PC-9 (cell line): ENCODE measurements at regions of chr13 and their contacts with region 1.

Region 1: DNA sequence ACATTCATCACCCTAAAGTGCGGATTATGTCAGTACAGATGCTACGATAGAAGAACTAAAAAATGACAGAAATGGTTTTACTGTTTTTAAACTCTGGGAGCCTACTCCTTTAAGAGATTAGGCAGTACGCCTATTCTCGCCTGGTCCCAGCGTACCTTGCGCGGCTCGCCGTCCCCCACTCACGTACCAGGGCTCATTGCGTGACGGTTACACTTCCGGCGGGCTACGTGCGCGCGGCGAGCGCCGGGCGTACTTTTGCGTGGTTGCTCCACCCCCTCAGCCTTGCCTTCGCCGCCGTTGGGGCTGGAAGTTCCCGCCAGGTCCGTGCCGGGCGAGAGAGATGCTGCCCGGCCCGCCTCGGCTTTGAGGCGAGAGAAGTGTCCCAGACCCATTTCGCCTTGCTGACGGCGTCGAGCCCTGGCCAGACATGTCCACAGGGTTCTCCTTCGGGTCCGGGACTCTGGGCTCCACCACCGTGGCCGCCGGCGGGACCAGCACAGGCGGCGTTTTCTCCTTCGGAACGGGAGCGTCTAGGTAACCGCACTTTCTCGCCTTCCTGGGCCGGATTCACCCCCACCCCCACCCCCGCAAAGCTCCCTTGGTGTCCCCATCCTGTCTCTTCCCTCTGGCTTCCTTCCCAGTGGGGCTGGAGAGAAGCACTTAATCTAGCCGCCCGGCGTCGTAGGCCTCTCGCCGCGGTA is at the start of gene NUP58:
- DNase-seq: peak; percentile 79 to 85
- H3K4me3 ChIP-seq: peak within 1 kb of the TSS; percentile 64
- H3K27ac ChIP-seq: peak within 1 kb of the TSS; percentile 65
- H3K4me1 ChIP-seq: peaks cover 41% of the 10 kb centered on the region
- H3K27me3 ChIP-seq: 0 out of 2 replicates have a peak, but pooled peaks cover 7% of the 10 kb centered on the region
- CTCF ChIP-seq: no peak
- total RNA-seq, gene NUP58: 50.6 and 55.1 TPM in 2 replicates

Region 2: DNA sequence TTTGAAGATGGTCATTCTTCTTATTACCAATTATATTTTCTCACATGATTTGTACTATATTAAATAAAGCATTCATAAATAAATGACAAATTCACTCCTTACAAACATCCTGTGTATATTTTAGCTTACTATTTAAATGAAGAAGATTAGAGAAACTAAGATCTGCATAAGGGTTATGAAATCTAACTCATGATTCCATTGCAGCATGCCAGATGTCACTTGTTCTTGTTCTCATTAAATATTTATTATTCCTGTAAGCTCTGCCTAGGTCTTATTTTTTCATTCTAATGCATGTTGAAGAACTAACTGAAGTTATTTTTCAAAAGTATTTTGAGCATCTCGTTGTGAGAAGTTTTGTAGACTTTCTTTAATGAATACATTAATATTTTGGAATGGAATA is 18.3 kb after region 1 on chr13:
- CTCF ChIA-PET with region 1: interaction called, 3 read pairs
- POLR2A ChIA-PET with region 1: interaction called, 3 read pairs
- intact Hi-C with region 1: loop called (anchors 1 kb)
- DNase-seq: no peak
- H3K4me3 ChIP-seq: no peak overlapping the region
- H3K27ac ChIP-seq: peak overlapping the region; percentile 83; the same call in 1 of the 2 replicates
- H3K4me1 ChIP-seq: peaks cover 27% of the 10 kb centered on the region
- H3K27me3 ChIP-seq: no peaks in the 10 kb centered on the region
- CTCF ChIP-seq: no peak